PC-9 (cell line): ENCODE measurements at regions of chr1 and their contacts with region 1.

Region 1: DNA sequence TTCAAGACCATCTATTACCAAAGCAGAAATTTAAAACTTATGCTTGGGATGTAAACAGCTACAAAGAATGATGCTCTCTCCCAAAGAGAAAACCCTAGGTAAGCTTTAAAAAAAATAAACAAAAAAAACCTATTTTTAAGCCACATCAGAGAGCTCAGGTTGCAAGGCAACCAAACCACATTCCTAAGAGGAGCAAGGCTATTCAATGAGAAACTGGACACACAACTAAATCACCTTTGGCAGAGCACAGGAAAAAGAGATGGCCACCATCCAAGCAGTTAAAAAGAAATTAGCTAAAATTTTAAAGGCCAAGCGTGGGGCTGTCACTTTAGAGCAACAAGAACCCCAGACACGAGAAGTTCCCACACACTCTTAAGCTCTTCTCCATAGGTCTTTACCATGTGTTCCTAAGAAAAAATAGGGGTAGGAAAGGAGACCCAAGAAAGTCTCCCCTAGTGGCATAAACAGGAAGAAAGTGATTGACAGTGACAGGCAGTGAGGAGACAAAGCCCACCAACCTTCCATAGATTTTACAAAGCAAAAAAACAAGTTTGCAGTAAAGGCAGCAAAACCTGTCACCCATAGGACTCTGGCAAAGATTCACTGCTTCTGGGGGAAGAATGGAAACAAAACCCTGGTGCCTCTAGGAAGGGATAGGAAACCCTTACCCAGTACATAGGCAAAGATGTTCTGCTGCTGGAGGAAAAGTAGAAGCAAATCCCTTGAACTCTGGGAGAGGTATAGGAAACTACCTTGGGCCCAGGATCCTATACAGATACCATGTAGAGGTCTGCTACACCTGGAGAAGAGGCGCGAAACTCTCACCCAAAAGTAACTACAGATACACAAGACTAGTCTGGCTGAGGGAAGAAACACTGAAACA is 68.5 kb downstream of the FOXJ3 start:
- DNase-seq: peak; percentile 42 to 85
- H3K4me3 ChIP-seq: peak overlapping the region; percentile 31; the same call in 1 of the 2 replicates
- H3K27ac ChIP-seq: peak overlapping the region; percentile 61
- H3K4me1 ChIP-seq: peaks cover 35% of the 10 kb centered on the region
- H3K27me3 ChIP-seq: no peaks in the 10 kb centered on the region
- CTCF ChIP-seq: peak; percentile 46; the same call in 1 of the 2 replicates

Region 2: DNA sequence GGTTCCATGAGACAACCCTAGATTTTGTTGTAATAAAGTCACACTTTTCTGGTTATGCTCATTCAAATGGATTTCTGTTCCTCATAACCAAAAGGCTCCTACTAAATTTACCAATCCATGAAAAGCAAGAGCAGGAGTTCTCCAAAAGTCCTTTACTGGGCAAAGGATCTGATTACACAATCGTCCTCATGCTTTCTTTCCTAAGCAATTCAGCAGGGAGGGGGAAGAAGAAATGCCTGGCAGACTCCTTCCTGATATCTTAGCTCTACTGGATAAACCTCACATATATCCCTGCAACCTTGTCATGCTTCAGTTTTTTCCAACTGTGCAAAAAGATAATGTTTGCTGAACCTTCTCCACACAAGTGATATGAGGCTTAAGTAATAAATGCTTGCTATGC is 180.9 kb before region 1 on chr1:
- CTCF ChIA-PET with region 1: no interaction called
- POLR2A ChIA-PET with region 1: no interaction called
- intact Hi-C with region 1: no loop called
- DNase-seq: no peak
- H3K4me3 ChIP-seq: no peak overlapping the region
- H3K27ac ChIP-seq: no peak overlapping the region
- H3K4me1 ChIP-seq: no peaks in the 10 kb centered on the region
- H3K27me3 ChIP-seq: no peaks in the 10 kb centered on the region
- CTCF ChIP-seq: no peak

Region 3: GRCh38 chr1:42114269-42114668 is 152.2 kb before region 1 on chr1:
- CTCF ChIA-PET with region 1: interaction called, 14 read pairs
- POLR2A ChIA-PET with region 1: no interaction called
- intact Hi-C with region 1: no loop called
- DNase-seq: peak in 1 of 2 experiments; percentile 12
- H3K4me3 ChIP-seq: no peak overlapping the region
- H3K27ac ChIP-seq: no peak overlapping the region
- H3K4me1 ChIP-seq: no peaks in the 10 kb centered on the region
- H3K27me3 ChIP-seq: no peaks in the 10 kb centered on the region
- CTCF ChIP-seq: no peak

Region 4: GRCh38 chr1:42209621-42210251 is 56.8 kb before region 1 on chr1:
- CTCF ChIA-PET with region 1: no interaction called
- POLR2A ChIA-PET with region 1: interaction called, 4 read pairs
- intact Hi-C with region 1: loop called (anchors 1 kb)
- DNase-seq: peak; percentile 64 to 68
- H3K4me3 ChIP-seq: no peak overlapping the region
- H3K27ac ChIP-seq: peak overlapping the region; percentile 66
- H3K4me1 ChIP-seq: peaks cover 99% of the 10 kb centered on the region
- H3K27me3 ChIP-seq: no peaks in the 10 kb centered on the region
- CTCF ChIP-seq: no peak

Region 5: DNA sequence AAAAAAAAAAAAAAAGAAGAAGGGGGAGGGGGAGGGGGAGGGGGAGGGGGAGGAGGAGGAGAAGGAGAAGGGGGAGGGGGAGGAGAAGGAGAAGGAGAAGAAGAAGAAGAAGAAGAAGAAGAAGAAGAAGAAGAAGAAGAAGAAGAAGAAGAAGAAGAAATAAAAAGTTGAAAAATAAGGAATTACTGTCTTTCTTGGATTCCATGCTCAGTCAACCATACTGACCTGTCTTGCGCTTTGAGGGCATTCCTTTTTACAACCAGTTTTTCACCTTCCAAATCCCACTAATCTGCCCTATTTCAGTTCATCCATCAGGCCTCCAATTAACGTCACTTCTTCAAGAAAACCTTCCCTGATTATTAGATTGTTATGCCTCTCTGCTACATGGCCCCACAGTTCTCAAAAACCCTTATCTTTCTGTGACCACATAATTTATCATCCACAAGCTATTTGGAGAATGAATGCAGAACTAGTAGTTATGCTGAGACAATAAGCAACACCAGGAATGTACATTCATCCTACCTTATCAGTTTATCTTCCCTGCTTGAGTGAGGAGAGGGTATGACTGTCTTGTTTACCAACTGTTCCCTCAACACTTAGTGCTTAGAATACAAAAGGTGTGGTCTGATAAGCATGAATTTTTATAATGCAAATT is 44.4 kb before region 1 on chr1:
- CTCF ChIA-PET with region 1: no interaction called
- POLR2A ChIA-PET with region 1: interaction called, 7 read pairs
- intact Hi-C with region 1: loop called (anchors 2 kb)
- DNase-seq: peak; percentile 22 to 93
- H3K4me3 ChIP-seq: no peak overlapping the region
- H3K27ac ChIP-seq: peak overlapping the region; percentile 51
- H3K4me1 ChIP-seq: peaks cover 65% of the 10 kb centered on the region
- H3K27me3 ChIP-seq: no peaks in the 10 kb centered on the region
- CTCF ChIP-seq: no peak

Region 6: DNA sequence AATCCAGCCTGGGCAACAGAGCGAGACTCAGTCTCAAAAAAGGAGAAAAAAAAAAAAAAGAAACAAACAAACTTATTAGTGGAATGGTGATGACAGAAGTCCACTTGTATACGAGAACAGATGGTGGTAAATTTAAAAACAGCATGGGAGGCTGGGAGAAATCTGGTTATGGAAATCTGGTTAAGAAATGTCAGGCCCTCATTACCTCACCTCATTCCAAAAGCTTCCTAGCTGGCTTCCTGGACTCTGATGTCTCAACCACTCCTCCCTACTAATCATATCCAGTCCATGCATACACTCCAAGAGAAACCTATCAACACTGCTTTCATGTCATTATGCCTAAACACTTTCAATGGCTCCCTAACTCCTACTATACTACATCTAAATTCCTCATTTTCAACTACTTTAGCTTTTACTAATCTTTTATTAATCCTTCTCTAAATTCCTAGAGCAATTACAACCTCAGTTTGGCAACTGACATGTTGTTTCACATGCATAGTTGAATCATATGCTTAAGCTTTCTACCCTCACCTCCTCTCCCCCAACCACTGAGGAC is 15.6 kb after region 1 on chr1:
- CTCF ChIA-PET with region 1: interaction called, 3 read pairs
- POLR2A ChIA-PET with region 1: interaction called, 24 read pairs
- intact Hi-C with region 1: no loop called
- DNase-seq: peak in 1 of 2 experiments; percentile 42
- H3K4me3 ChIP-seq: peak overlapping the region; percentile 4; the same call in 1 of the 2 replicates
- H3K27ac ChIP-seq: peak overlapping the region; percentile 86
- H3K4me1 ChIP-seq: peaks cover 48% of the 10 kb centered on the region
- H3K27me3 ChIP-seq: no peaks in the 10 kb centered on the region
- CTCF ChIP-seq: no peak

Region 7: GRCh38 chr1:42456010-42456758 is 189.7 kb after region 1 on chr1 and contains the starts of genes PPCS and ZMYND12:
- CTCF ChIA-PET with region 1: no interaction called
- POLR2A ChIA-PET with region 1: interaction called, 20 read pairs
- intact Hi-C with region 1: no loop called
- DNase-seq: peak; percentile 73 to 90
- H3K4me3 ChIP-seq: peak within 1 kb of the TSS; percentile 91
- H3K27ac ChIP-seq: peak within 1 kb of the TSS; percentile 70
- H3K4me1 ChIP-seq: peaks cover 26% of the 10 kb centered on the region
- H3K27me3 ChIP-seq: no peaks in the 10 kb centered on the region
- CTCF ChIP-seq: no peak
- total RNA-seq, gene PPCS: 73.0 and 76.0 TPM in 2 replicates
- total RNA-seq, gene ZMYND12: 1.7 and 3.7 TPM in 2 replicates

Region 8: GRCh38 chr1:42601472-42601871 is 335.0 kb after region 1 on chr1:
- CTCF ChIA-PET with region 1: no interaction called
- POLR2A ChIA-PET with region 1: interaction called, 10 read pairs
- intact Hi-C with region 1: no loop called
- DNase-seq: no peak
- H3K4me3 ChIP-seq: no peak overlapping the region
- H3K27ac ChIP-seq: no peak overlapping the region
- H3K4me1 ChIP-seq: no peaks in the 10 kb centered on the region
- H3K27me3 ChIP-seq: no peaks in the 10 kb centered on the region
- CTCF ChIP-seq: no peak